Naive thymus-derived CD4-positive, alpha-beta T cell (primary cell): ENCODE measurements at regions of chr12 and their contacts with region 1.

Region 1: DNA sequence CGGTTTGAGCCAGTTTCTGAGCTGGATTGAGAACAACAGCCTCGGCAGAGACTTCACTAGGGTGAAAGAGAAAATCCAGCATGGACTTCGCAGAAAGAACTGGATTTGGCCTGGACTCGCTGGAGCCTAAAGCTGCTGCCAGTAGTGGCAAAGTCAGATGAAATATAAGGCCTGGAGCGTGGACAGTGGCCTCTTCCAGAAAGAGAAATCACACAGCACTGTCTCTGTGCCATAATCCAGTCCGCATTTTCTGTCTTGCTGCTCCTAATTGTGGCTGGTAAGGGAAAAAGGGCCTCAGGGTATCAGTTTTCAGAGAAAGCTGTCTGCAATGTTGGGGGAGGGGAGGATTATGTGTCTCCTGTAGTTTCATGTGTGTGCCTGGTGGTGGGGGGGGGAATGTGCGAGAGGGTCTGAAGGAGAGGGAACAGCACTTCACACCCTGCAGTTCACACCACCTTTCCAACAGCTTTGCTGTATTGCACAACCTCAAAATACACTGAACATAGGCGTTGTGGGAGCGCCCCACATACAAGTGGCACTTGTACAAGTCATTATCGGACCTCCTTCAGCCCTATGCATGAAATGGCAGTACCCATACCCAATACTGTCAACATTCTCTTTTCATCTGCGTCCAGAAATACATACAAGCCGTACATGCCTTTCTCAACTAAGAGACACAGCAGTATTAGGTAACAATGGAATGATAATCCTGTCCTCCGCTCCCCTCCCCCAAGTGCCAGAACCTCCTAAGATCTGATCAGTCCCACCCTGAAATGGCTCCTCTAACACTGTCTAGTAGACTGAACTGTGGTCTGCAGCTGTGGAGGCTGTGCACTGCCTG is 107.5 kb upstream of the ATF7IP start:
- DNase-seq: peak; percentile 49 to 85 (median 79)
- ATAC-seq: peak; percentile 72
- H3K4me3 ChIP-seq: peak overlapping the region; percentile 31
- H3K4me3 Mint-ChIP-seq: peak overlapping the region; percentile 67 to 81 (median 77)
- H3K27ac ChIP-seq: peak overlapping the region; percentile 65
- H3K27ac Mint-ChIP-seq: peak overlapping the region; percentile 89 to 99 (median 98)
- H3K4me1 ChIP-seq: peaks cover 37 to 38% of the 10 kb centered on the region in 2 donors
- H3K4me1 Mint-ChIP-seq: peaks cover 39 to 66% (median 61%) of the 10 kb centered on the region in 7 donors
- H3K27me3 ChIP-seq: no peaks in the 10 kb centered on the region
- H3K27me3 Mint-ChIP-seq: no peaks in the 10 kb centered on the region

Region 2: GRCh38 chr12:14066051-14066450 is 191.9 kb before region 1 on chr12:
- CTCF ChIA-PET with region 1: no interaction called
- POLR2A ChIA-PET with region 1: no interaction called
- intact Hi-C with region 1: no loop called
- DNase-seq: no peak
- ATAC-seq: no peak
- H3K4me3 ChIP-seq: no peak overlapping the region
- H3K4me3 Mint-ChIP-seq: no peak overlapping the region
- H3K27ac ChIP-seq: no peak overlapping the region
- H3K27ac Mint-ChIP-seq: no peak overlapping the region
- H3K4me1 ChIP-seq: no peaks in the 10 kb centered on the region
- H3K4me1 Mint-ChIP-seq: no peaks in the 10 kb centered on the region
- H3K27me3 ChIP-seq: no peaks in the 10 kb centered on the region
- H3K27me3 Mint-ChIP-seq: peaks cover 0 to 36% (median 5%) of the 10 kb centered on the region in 5 donors

Region 3: DNA sequence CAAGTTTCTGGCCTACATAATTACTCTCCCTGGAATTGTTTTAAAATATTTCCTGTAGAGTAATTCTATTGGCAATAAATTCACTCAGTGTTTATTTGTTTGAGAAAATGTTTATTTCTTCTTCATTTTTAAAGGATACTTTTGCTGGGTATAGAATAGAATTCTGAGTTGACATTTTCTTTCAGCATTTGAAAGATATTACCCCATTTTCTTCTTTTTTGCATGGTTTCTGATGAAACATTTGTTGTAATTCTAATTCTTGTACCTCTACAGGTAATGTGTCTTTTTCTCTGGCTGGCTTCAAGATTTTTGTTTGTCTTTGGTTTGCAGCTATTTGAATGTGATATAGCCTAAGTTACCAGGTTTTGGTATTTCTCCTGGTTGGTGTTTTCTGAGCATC is 82.4 kb after region 1 on chr12:
- CTCF ChIA-PET with region 1: no interaction called
- POLR2A ChIA-PET with region 1: no interaction called
- intact Hi-C with region 1: no loop called
- DNase-seq: no peak
- ATAC-seq: no peak
- H3K4me3 ChIP-seq: no peak overlapping the region
- H3K4me3 Mint-ChIP-seq: no peak overlapping the region
- H3K27ac ChIP-seq: no peak overlapping the region
- H3K27ac Mint-ChIP-seq: no peak overlapping the region
- H3K4me1 ChIP-seq: no peaks in the 10 kb centered on the region
- H3K4me1 Mint-ChIP-seq: no peaks in the 10 kb centered on the region
- H3K27me3 ChIP-seq: no peaks in the 10 kb centered on the region
- H3K27me3 Mint-ChIP-seq: peaks cover 0 to 4% (median 0%) of the 10 kb centered on the region in 5 donors

Region 4: DNA sequence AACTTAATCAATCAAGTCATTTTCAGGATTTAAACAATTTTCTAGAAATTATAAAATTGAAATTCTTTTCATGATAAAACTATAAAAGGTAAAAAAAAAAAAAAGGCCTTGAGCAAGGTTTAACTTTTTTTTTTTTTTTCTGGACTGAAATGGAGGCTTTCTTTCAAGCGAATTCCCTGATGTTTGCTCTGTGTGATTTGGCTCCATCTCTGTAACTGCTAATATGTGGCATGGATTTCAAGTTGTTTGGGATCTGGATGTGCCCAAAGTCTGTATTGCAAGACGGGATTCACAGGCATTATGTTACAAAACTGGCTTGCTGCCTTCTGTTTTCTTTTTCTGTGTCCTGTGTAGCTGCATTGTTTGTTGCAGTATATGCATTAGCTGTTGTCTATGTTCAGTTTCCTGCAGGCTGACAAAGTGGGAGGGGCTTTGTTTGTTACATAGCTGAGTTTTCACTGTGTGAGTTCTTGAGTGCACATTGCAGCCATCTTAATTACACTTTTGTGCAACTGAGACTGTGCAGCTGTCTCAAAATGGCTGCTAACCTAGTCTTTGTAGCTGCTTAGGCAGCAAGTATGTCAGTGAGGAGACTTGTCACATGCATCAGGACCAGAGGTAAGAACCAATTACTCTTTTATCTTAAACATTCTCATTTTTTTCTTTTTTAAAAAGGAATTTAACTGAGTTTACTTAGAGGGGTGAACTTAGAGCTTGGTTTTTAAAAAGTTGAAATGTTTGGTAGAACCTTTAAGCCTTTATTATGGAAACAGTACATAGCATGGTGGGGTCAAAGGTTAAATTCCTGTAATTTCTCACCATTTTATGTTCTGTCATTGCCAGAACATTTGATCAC is 127.1 kb after region 1 on chr12:
- CTCF ChIA-PET with region 1: interaction called, 5 read pairs
- POLR2A ChIA-PET with region 1: interaction called, 15 read pairs
- intact Hi-C with region 1: loop called (anchors 1 kb)
- DNase-seq: peak in 8 of 9 donors; percentile 47 to 84 (median 77)
- ATAC-seq: peak; percentile 96
- H3K4me3 ChIP-seq: peak overlapping the region; percentile 18
- H3K4me3 Mint-ChIP-seq: peak overlapping the region; percentile 65 to 85 (median 76)
- H3K27ac ChIP-seq: peak overlapping the region; percentile 71
- H3K27ac Mint-ChIP-seq: peak overlapping the region; percentile 86 to 95 (median 93)
- H3K4me1 ChIP-seq: peaks cover 32 to 49% of the 10 kb centered on the region in 2 donors
- H3K4me1 Mint-ChIP-seq: peaks cover 31 to 79% (median 68%) of the 10 kb centered on the region in 7 donors
- H3K27me3 ChIP-seq: no peaks in the 10 kb centered on the region
- H3K27me3 Mint-ChIP-seq: no peaks in the 10 kb centered on the region

Region 5: DNA sequence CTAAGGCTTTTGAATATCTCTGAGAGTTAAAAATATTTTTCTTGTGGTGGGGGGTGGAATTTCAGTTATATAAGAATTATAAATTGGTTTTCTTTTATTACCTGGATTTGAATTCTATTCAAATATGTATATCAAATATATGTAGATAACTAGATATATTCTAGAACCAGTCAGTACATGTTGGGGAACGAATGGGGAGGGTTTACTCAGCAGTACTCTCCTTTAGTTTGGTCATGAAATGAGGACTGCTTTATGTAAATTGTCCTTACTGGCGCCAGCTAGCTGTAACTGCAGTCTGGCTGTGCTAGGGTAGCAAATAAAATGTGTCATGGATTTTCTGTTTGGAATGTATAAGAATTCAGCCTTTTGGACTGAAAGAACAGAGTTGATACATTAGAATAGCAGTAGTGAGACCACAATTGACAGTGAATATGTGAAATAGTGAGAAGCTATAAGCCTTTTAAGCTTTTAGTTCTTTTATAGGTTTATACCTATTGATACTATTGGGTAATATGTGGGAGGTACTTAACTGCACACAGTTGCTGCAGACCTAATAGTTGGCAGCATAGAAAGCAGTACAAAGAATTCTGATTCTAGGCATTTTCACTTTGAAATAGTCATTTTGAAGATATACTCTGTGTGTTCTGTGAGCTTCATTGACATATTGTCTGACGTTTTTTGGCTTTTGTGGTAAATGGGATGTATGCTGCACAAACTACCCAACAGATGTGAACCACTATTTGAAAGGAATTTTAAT is 136.5 kb after region 1 on chr12:
- CTCF ChIA-PET with region 1: interaction called, 5 read pairs
- POLR2A ChIA-PET with region 1: interaction called, 8 read pairs
- intact Hi-C with region 1: loop called (anchors 1 kb)
- DNase-seq: peak in 7 of 9 donors; percentile 57 to 82 (median 71)
- ATAC-seq: peak; percentile 86
- H3K4me3 ChIP-seq: peak overlapping the region; percentile 33
- H3K4me3 Mint-ChIP-seq: peak overlapping the region; percentile 49 to 87 (median 76)
- H3K27ac ChIP-seq: peak overlapping the region; percentile 75
- H3K27ac Mint-ChIP-seq: peak overlapping the region; percentile 83 to 97 (median 95)
- H3K4me1 ChIP-seq: peaks cover 62 to 84% of the 10 kb centered on the region in 2 donors
- H3K4me1 Mint-ChIP-seq: peaks cover 47 to 99% (median 91%) of the 10 kb centered on the region in 7 donors
- H3K27me3 ChIP-seq: no peaks in the 10 kb centered on the region
- H3K27me3 Mint-ChIP-seq: no peaks in the 10 kb centered on the region

Region 6: DNA sequence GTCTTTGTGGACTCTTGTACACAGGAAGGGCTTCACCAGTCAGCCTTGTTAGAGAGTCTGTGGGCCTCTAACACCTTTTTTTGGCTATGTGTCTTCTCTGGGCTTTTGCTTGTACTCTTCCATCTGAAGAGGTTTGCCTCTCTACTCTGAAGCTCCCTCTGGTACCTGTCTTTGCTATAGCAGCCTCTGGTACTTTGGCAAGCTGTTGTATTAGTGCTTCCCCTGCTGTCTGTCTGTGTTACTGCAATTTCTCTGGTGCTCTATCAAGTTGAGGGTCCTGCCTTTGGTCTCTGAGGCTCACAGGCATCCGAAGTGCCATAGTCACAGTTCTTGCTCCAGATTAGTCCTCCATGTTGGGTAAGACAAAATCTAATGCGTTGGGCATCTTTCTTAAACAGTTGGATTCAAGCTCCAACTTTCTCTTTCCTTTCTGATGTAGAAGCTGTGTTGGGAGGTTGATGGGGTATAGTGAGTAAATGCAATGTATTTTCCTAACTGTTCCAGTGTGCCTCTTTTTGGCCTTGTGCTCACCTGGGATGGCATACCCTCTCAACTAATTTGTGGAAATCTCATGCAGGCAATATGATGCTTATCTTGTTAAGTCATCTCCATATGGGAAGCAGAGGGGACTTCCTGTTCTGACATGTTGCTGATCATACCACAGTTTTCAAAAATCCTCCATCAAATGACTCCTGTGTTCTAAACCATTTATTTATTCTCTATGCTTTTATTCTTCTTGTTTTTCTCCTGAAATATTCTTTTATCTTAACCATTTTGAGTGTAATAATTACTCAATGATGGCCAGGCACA is 196.3 kb after region 1 on chr12:
- CTCF ChIA-PET with region 1: interaction called, 3 read pairs
- POLR2A ChIA-PET with region 1: no interaction called
- intact Hi-C with region 1: loop called (anchors 1 kb)
- DNase-seq: peak in 7 of 9 donors; percentile 5 to 33 (median 25)
- ATAC-seq: peak; percentile 86
- H3K4me3 ChIP-seq: no peak overlapping the region
- H3K4me3 Mint-ChIP-seq: peak overlapping the region in 5 of 10 donors; percentile 1 to 32 (median 3)
- H3K27ac ChIP-seq: no peak overlapping the region
- H3K27ac Mint-ChIP-seq: peak overlapping the region; percentile 9 to 83 (median 73)
- H3K4me1 ChIP-seq: peaks cover 17 to 18% of the 10 kb centered on the region in 2 donors
- H3K4me1 Mint-ChIP-seq: peaks cover 36 to 68% (median 65%) of the 10 kb centered on the region in 7 donors
- H3K27me3 ChIP-seq: no peaks in the 10 kb centered on the region
- H3K27me3 Mint-ChIP-seq: no peaks in the 10 kb centered on the region

Region 7: GRCh38 chr12:15563663-15564062 is 1305.7 kb after region 1 on chr12:
- CTCF ChIA-PET with region 1: no interaction called
- POLR2A ChIA-PET with region 1: no interaction called
- intact Hi-C with region 1: loop called in 1 of 2 experiments (anchors 10 kb)
- DNase-seq: peak in 6 of 9 donors; percentile 39 to 54 (median 50)
- ATAC-seq: peak; percentile 84
- H3K4me3 ChIP-seq: peak overlapping the region; percentile 38
- H3K4me3 Mint-ChIP-seq: peak overlapping the region; percentile 54 to 87 (median 82)
- H3K27ac ChIP-seq: peak overlapping the region; percentile 82
- H3K27ac Mint-ChIP-seq: peak overlapping the region; percentile 87 to 96 (median 94)
- H3K4me1 ChIP-seq: peaks cover 0 to 37% of the 10 kb centered on the region in 2 donors
- H3K4me1 Mint-ChIP-seq: peaks cover 36 to 89% (median 77%) of the 10 kb centered on the region in 7 donors
- H3K27me3 ChIP-seq: no peaks in the 10 kb centered on the region
- H3K27me3 Mint-ChIP-seq: peaks cover 0 to 5% (median 0%) of the 10 kb centered on the region in 5 donors

Region 8: DNA sequence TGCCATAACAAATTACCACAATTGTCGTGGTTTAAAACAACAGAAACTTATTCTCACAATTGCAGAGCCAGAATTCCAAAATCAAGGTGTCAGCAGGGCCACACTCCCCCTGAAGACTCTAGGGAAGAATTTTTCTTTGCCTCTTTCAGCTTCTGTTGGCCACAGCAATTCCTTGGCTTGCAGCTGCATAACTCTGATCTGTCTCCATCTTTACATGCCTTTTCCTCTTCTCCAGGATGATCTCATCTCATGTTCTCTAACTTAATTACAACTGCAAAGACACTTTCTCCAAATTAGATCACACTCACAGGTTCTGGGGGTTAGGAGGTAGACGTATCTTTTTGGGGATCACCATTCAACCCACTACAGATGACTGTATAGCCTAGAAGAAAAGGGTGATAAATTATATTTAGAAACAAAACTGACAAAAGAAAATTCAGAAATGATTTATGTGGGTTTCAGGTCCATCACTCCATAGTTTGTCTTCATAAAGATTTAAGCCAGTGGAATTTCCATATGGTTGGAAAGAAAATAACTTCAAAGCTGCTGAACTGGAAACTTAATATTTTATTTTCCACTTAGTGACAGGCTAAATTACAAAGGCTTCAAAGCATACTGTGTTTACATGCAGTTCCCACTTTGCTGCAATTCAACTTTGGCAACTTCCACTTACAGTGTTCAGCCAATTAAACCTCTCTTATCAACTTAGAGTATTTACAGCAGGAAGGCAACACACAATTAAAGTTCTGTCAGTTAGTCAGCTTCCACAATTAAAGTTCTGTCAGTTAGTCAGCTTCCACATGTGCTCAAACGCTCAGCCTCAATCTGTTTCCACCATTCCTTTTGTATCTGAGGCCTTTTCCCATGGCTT is 1318.0 kb after region 1 on chr12:
- CTCF ChIA-PET with region 1: no interaction called
- POLR2A ChIA-PET with region 1: no interaction called
- intact Hi-C with region 1: loop called in 1 of 2 experiments (anchors 5 kb)
- DNase-seq: no peak
- ATAC-seq: no peak
- H3K4me3 ChIP-seq: no peak overlapping the region
- H3K4me3 Mint-ChIP-seq: peak overlapping the region in 3 of 10 donors; percentile 0 to 48 (median 21)
- H3K27ac ChIP-seq: no peak overlapping the region
- H3K27ac Mint-ChIP-seq: peak overlapping the region in 6 of 9 donors; percentile 6 to 74 (median 24)
- H3K4me1 ChIP-seq: peaks cover 0 to 7% of the 10 kb centered on the region in 2 donors
- H3K4me1 Mint-ChIP-seq: peaks cover 11 to 63% (median 47%) of the 10 kb centered on the region in 7 donors
- H3K27me3 ChIP-seq: no peaks in the 10 kb centered on the region
- H3K27me3 Mint-ChIP-seq: no peaks in the 10 kb centered on the region

Region 9: GRCh38 chr12:15789220-15790171 is 1531.5 kb after region 1 on chr12 and contains the start of gene EPS8:
- CTCF ChIA-PET with region 1: no interaction called
- POLR2A ChIA-PET with region 1: interaction called, 3 read pairs
- intact Hi-C with region 1: loop called in 1 of 2 experiments (anchors 5 kb)
- DNase-seq: peak; percentile 82 to 92 (median 91)
- ATAC-seq: peak; percentile 95
- H3K4me3 ChIP-seq: peak within 1 kb of the TSS; percentile 78
- H3K4me3 Mint-ChIP-seq: peak within 1 kb of the TSS; percentile 91 to 99 (median 96)
- H3K27ac ChIP-seq: peak within 1 kb of the TSS; percentile 63
- H3K27ac Mint-ChIP-seq: peak within 1 kb of the TSS; percentile 58 to 97 (median 84)
- H3K4me1 ChIP-seq: peaks cover 0 to 7% of the 10 kb centered on the region in 2 donors
- H3K4me1 Mint-ChIP-seq: peaks cover 10 to 17% (median 15%) of the 10 kb centered on the region in 7 donors
- H3K27me3 ChIP-seq: peaks cover 0 to 11% of the 10 kb centered on the region in 2 donors
- H3K27me3 Mint-ChIP-seq: peaks cover 26 to 74% (median 49%) of the 10 kb centered on the region in 5 donors
- total RNA-seq, gene EPS8: 2.0 to 3.1 (median 2.7) TPM